OCI-LY7 (cell line): ENCODE measurements at regions of chr10 and their contacts with region 1.

Region 1: DNA sequence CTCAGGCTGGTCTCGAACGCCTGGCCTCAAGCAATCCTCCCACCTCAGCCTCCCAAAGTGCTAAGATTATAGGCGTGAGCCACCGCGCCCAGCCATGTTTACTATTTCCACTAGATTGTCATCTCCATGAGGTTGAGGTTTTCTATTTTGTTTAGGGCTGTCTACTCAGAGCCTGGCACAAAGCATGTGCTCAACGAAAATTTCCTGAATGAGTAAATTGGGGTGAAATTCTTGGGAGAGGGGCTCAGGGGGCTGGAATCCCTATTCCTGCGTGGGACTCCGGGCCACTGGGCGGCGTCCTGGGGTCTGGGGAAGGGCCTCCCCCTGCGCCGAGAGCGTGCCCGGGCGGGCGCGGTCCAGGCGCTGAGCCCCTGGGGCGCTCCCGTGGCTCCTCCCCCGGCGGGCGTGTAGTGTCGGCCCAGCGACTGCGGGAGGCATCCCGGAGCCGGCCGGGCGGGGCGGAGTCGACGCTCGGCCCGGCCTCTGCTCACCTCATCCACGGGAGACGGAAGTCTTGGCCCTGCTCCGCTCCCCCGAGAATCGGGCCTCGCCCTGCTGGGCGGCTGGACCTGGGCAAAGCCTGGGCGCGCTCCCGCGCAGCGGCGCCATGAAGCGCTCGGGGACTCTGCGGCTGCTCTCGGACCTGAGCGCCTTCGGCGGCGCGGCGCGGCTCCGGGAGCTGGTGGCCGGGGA is at the start of gene HPS6:
- DNase-seq: peak; percentile 92
- H3K4me3 ChIP-seq: peak within 1 kb of the TSS; percentile 100
- H3K27ac ChIP-seq: peak within 1 kb of the TSS; percentile 36
- H3K4me1 ChIP-seq: peaks cover 17% of the 10 kb centered on the region
- CTCF ChIP-seq: peak; percentile 65
- total RNA-seq, gene HPS6: 23.8 and 28.2 TPM in 2 replicates

Region 2: DNA sequence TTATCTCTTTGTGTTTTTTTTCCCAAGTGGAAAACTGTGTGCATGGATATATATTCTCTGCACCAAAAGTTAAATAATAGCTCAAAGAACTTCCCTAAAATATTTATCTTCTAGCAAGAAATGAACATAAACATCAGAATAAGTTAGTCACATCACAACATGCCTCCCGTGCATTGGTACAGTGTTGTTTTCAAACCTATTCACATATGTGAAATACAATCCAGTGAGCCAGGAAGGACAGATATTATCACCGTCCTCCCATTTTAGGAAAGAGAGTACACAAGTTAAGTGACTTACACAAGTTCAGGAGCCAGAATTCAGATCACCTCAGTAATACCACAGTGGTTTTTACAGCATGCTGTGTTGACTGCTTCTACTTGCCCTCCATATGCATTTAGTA is 31.2 kb before region 1 on chr10:
- CTCF ChIA-PET with region 1: no interaction called
- POLR2A ChIA-PET with region 1: no interaction called
- intact Hi-C with region 1: no loop called
- DNase-seq: no peak
- H3K4me3 ChIP-seq: no peak overlapping the region
- H3K27ac ChIP-seq: no peak overlapping the region
- H3K4me1 ChIP-seq: no peaks in the 10 kb centered on the region
- CTCF ChIP-seq: no peak

Region 3: GRCh38 chr10:102114861-102115618 is 50.0 kb after region 1 on chr10:
- CTCF ChIA-PET with region 1: no interaction called
- POLR2A ChIA-PET with region 1: no interaction called
- intact Hi-C with region 1: loop called (anchors 2 kb)
- DNase-seq: peak; percentile 87
- H3K4me3 ChIP-seq: peak overlapping the region; percentile 87
- H3K27ac ChIP-seq: peak overlapping the region; percentile 80
- H3K4me1 ChIP-seq: peaks cover 62% of the 10 kb centered on the region
- CTCF ChIP-seq: no peak